Colonic mucosa (tissue), 4 donors: ENCODE measurements at regions of chr3 and their contacts with region 1.

Region 1: GRCh38 chr3:48439820-48440589 is at the starts of genes CCDC51 and TMA7:
- DNase-seq: peak; percentile 99
- H3K4me3 ChIP-seq: peak within 1 kb of the TSS; percentile 77
- H3K27ac ChIP-seq: peak within 1 kb of the TSS; percentile 83
- H3K4me1 ChIP-seq: peaks cover 8% of the 10 kb centered on the region
- H3K27me3 ChIP-seq: no peaks in the 10 kb centered on the region
- CTCF ChIP-seq: no peak
- total RNA-seq, gene CCDC51: 11.8 to 21.5 TPM
- total RNA-seq, gene TMA7: 185 to 259 TPM

Region 2: DNA sequence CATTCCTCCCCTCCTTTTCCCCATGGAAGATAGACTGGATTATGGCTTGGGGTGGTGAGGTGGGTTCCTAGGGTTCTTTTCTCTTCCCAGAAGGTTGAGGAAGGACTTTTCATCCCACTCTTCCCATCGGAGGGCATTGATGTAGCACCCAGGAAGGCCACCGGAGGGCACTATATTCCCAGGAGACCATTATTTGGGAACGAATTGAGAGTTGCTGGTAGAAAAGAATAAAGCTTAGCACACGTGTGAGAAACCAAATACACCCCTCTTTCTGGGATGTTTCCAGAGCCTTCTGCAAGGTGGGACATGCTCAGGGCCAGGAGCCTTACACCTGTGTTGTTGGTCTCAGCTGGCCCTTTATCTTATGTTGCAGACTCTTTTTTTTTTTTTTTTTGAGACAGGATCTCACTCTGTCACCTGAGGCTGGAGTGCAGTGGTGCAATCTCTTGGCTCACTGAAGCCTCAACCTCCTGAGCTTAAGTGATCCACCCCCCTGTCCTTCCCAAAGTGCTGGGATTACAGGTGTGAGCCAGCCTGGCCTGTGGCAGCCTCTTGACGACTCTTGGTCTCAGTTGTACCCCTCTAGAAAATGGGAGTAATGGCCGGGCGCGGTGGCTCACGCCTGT is 245.4 kb before region 1 on chr3:
- intact Hi-C with region 1: loop called (anchors 5 kb)
- DNase-seq: peak; percentile 78
- H3K4me3 ChIP-seq: no peak overlapping the region
- H3K27ac ChIP-seq: no peak overlapping the region
- H3K4me1 ChIP-seq: no peaks in the 10 kb centered on the region
- H3K27me3 ChIP-seq: no peaks in the 10 kb centered on the region
- CTCF ChIP-seq: peak; percentile 70

Region 3: DNA sequence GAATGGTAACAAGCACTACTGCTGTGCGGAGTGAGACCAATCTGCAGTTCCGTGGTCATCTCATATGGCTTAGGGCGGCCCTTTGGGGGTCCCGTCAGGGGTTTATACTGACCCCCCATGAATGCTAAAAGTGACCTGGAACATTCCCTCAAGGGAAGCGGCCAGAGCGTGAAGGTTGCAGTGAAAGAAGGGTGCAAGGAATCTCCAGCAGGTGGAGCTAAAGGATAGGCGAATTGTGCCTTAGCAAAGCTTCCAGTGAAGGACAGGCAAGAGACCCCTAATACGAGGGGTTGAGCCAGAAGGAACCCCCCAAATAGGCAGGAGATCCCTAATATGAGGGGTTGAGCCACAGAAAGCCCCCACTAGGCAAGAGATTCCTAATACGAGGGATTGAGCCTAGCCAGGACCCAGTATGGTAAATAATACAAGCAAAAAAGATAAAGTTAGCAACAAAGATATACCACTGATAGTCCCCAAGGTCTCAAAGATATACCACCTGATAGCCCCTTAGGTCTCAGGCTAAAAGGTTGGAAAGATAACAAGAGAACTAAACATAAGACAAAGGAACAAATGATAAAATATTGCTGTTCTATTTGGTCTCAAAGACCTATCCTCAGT is 166.3 kb before region 1 on chr3:
- intact Hi-C with region 1: loop called (anchors 2 kb)
- DNase-seq: peak; percentile 74
- H3K4me3 ChIP-seq: no peak overlapping the region
- H3K27ac ChIP-seq: no peak overlapping the region
- H3K4me1 ChIP-seq: no peaks in the 10 kb centered on the region
- H3K27me3 ChIP-seq: no peaks in the 10 kb centered on the region
- CTCF ChIP-seq: peak; percentile 69

Region 4: DNA sequence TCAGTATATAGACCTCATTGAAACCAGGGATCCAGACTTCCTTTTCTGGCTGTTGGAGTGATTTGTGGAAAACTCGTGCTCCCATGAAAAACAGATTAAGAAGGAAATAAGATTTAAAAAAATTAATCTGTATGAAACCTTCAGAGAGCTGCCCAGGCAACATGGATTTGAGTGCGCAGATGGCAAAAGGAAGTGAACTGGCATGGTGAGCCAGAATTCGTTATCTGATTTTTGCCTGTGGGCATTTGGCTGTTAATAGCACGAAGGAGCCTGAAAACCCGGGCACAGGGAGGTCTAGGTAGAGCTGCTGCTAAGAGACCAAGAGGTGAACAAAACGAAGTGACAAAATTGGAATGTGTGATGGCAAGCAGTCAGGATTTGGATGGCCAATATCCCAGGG is 87.5 kb before region 1 on chr3:
- intact Hi-C with region 1: no loop called
- DNase-seq: no peak
- H3K4me3 ChIP-seq: no peak overlapping the region
- H3K27ac ChIP-seq: no peak overlapping the region
- H3K4me1 ChIP-seq: no peaks in the 10 kb centered on the region
- H3K27me3 ChIP-seq: no peaks in the 10 kb centered on the region
- CTCF ChIP-seq: no peak

Region 5: GRCh38 chr3:48400824-48401433 is 39.1 kb before region 1 on chr3:
- intact Hi-C with region 1: loop called (anchors 2 kb)
- DNase-seq: peak; percentile 66
- H3K4me3 ChIP-seq: no peak overlapping the region
- H3K27ac ChIP-seq: no peak overlapping the region
- H3K4me1 ChIP-seq: no peaks in the 10 kb centered on the region
- H3K27me3 ChIP-seq: no peaks in the 10 kb centered on the region
- CTCF ChIP-seq: peak; percentile 81

Region 6: GRCh38 chr3:48980295-48980694 is 540.3 kb after region 1 on chr3:
- intact Hi-C with region 1: no loop called
- DNase-seq: no peak
- H3K4me3 ChIP-seq: no peak overlapping the region
- H3K27ac ChIP-seq: no peak overlapping the region
- H3K4me1 ChIP-seq: no peaks in the 10 kb centered on the region
- H3K27me3 ChIP-seq: no peaks in the 10 kb centered on the region
- CTCF ChIP-seq: no peak